CD4-positive, alpha-beta memory T cell (primary cell): ENCODE measurements at regions of chr22 and their contacts with region 1.

Region 1: DNA sequence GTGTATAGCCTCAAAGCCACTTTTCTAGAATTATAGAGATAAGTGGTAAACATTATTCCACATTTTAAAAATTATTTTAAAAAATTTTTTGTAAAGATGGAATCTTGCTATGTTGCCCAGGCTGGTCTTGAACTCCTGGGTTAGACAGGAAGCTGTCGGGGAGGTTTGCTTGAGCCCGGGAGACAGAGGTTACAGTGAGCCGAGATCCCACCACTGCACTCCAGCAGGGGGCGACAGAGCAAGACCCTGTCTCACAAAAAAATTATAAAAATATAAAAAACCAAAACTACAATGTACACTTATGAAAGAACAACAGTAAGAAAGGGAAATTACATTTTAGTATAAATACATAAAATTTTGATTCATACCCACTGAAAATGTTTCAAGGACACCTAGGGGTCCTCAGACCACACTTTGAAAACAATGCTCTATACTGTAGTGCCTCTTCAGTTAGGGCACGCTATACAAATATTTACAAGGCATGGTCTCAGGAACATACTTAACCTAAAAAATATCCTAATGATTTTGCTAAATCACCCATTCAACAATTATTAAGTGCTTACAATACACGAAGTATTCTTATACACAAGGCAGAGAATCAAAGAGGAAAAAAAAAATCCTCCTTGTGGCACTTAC is 111.2 kb downstream of the MRTFA start:
- DNase-seq: peak; percentile 68 to 73 (median 69)
- H3K4me3 ChIP-seq: no peak overlapping the region
- H3K4me3 Mint-ChIP-seq: no peak overlapping the region
- H3K27ac ChIP-seq: no peak overlapping the region
- H3K27ac Mint-ChIP-seq: peak overlapping the region in 5 of 7 donors; percentile 16 to 87 (median 63)
- H3K4me1 ChIP-seq: peaks cover 22% of the 10 kb centered on the region
- H3K4me1 Mint-ChIP-seq: peaks cover 23 to 46% (median 31%) of the 10 kb centered on the region in 4 donors
- H3K27me3 ChIP-seq: no peaks in the 10 kb centered on the region
- H3K27me3 Mint-ChIP-seq: no peaks in the 10 kb centered on the region

Region 2: DNA sequence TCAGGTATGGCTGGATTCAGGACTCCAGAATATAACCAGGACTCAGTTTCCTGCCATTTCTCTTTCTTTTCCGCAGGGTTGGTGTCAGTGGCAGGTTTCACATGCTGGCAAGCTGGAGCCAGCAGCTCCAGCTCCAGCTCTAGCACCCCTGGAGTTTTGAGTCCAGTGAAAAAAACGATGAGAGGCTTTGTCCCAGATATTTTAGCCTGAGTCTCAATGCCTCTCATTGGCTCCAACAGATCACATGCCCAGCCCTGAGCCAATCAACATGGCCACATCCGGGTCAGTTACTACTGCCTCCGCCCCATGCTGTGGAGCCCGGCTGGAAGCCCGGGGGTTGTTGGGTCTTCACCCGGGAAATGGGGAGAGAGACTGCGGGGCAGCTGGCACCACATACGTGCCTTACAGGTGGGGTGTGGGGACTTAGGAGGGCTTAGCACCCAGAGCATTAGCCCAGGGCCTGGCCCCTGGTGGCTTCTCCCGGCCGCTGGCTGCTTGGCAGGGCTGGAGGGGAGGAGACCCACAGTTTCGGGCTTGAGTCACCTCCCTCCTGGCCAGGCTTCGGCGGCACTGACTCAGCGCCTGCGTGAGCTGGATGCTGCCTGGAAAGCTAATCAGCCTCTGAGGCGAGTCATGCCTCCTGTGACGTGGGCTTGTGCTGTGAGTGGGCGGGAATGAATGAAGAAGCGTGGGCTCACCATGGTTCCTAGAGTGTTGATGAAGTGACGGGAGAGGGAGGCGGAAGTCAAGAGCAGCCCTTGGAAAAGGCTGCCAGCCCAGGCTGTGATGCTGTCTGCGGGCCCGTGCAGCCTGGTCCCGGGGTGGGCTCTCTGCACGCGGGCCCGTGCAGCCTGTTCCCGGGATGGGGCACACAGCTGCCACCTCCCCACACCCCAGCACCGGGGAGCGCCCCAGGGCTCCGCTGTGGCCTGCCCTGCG is 126.5 kb after region 1 on chr22:
- CTCF ChIA-PET with region 1: interaction called, 172 read pairs
- POLR2A ChIA-PET with region 1: no interaction called
- intact Hi-C with region 1: no loop called
- DNase-seq: peak; percentile 72 to 89 (median 76)
- H3K4me3 ChIP-seq: peak overlapping the region in 1 of 2 donors; percentile 62
- H3K4me3 Mint-ChIP-seq: peak overlapping the region; percentile 78 to 92 (median 88)
- H3K27ac ChIP-seq: peak overlapping the region; percentile 60
- H3K27ac Mint-ChIP-seq: peak overlapping the region; percentile 61 to 94 (median 91)
- H3K4me1 ChIP-seq: peaks cover 4% of the 10 kb centered on the region
- H3K4me1 Mint-ChIP-seq: peaks cover 7 to 18% (median 12%) of the 10 kb centered on the region in 4 donors
- H3K27me3 ChIP-seq: no peaks in the 10 kb centered on the region
- H3K27me3 Mint-ChIP-seq: no peaks in the 10 kb centered on the region

Region 3: GRCh38 chr22:40679964-40680818 is 154.8 kb after region 1 on chr22:
- CTCF ChIA-PET with region 1: no interaction called
- POLR2A ChIA-PET with region 1: no interaction called
- intact Hi-C with region 1: no loop called
- DNase-seq: no peak
- H3K4me3 ChIP-seq: no peak overlapping the region
- H3K4me3 Mint-ChIP-seq: no peak overlapping the region
- H3K27ac ChIP-seq: no peak overlapping the region
- H3K27ac Mint-ChIP-seq: no peak overlapping the region
- H3K4me1 ChIP-seq: peaks cover 10% of the 10 kb centered on the region
- H3K4me1 Mint-ChIP-seq: peaks cover 6 to 19% (median 9%) of the 10 kb centered on the region in 4 donors
- H3K27me3 ChIP-seq: peaks cover 6% of the 10 kb centered on the region
- H3K27me3 Mint-ChIP-seq: peaks cover 6 to 9% of the 10 kb centered on the region in 2 donors